Naive thymus-derived CD8-positive, alpha-beta T cell (primary cell): ENCODE measurements at regions of chr1 and their contacts with region 1.

Region 1: DNA sequence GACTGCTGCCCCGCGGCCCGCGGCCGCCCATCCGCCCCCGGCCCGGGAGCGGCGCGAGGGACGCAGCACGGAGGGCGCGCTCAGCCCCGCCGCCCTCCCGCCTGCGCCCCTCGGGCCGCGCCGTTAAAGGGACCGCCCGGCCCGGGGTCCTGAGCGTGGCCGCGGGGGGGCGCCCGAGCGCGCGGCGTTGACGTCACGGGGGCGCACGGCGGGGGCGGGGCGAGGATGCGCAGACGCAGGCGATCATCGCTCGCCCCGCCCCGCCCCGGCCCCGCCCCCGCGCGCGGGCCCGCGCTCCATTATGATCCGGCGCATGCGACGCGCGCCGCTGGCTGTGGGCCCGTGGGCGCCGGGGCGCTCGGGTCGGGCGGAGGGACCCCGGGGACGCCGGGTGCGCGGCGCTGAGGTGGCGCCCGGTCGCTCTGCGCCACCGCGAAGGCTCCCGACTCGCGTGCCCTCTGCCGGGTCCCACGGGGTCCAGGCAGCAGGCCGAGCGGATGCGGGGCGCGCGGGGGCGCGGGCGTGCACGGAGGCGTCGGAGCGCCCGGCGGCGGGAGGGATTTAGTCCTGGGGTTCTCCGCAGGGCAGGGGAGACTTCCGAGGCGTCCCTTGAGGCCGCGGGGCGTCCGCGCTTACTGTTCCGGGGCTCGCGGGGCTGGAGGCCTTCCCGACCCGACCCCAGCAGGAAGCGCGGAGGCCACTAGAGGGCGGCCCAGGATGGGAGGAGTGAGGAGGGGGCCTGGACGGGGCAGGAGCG is at the start of gene DVL1:
- DNase-seq: peak; percentile 42 to 92 (median 76)
- ATAC-seq: peak; percentile 82
- H3K4me3 Mint-ChIP-seq: peak within 1 kb of the TSS; percentile 55 to 88 (median 74)
- H3K27ac Mint-ChIP-seq: peak within 1 kb of the TSS in 9 of 10 donors; percentile 9 to 90 (median 71)
- H3K4me1 Mint-ChIP-seq: peaks cover 18 to 42% (median 35%) of the 10 kb centered on the region in 4 donors
- H3K27me3 Mint-ChIP-seq: peaks cover 0 to 10% (median 0%) of the 10 kb centered on the region in 5 donors
- polyA plus RNA-seq, gene DVL1: 0.99 to 2.0 (median 1.4) TPM

Region 2: GRCh38 chr1:1399187-1399871 is 49.9 kb after region 1 on chr1 and contains the start of gene CCNL2:
- POLR2A ChIA-PET with region 1: interaction called, 10 read pairs
- DNase-seq: peak; percentile 97 to 99 (median 99)
- ATAC-seq: peak; percentile 93 to 95
- H3K4me3 Mint-ChIP-seq: peak within 1 kb of the TSS; percentile 86 to 95 (median 89)
- H3K27ac Mint-ChIP-seq: peak within 1 kb of the TSS; percentile 85 to 96 (median 92)
- H3K4me1 Mint-ChIP-seq: peaks cover 17 to 60% (median 50%) of the 10 kb centered on the region in 4 donors
- H3K27me3 Mint-ChIP-seq: no peaks in the 10 kb centered on the region
- polyA plus RNA-seq, gene CCNL2: 13.4 to 28.1 (median 13.7) TPM

Region 3: GRCh38 chr1:1550591-1551432 is 201.4 kb after region 1 on chr1:
- POLR2A ChIA-PET with region 1: no interaction called
- DNase-seq: no peak
- ATAC-seq: peak in 1 of 2 donors; percentile 30
- H3K4me3 Mint-ChIP-seq: no peak overlapping the region
- H3K27ac Mint-ChIP-seq: peak overlapping the region in 3 of 10 donors; percentile 20 to 52 (median 51)
- H3K4me1 Mint-ChIP-seq: peaks cover 3 to 22% (median 5%) of the 10 kb centered on the region in 4 donors
- H3K27me3 Mint-ChIP-seq: no peaks in the 10 kb centered on the region